Activated CD4-positive, alpha-beta T cell treated with anti-CD3 and anti-CD28 coated beads, Interleukin-2, amount 10 ng/mL, durations not matched to agents 24 days and 14 days (primary cell): ENCODE measurements at regions of chr1 and their contacts with region 1.

Region 1: GRCh38 chr1:160567858-160568682 is 11.2 kb downstream of the CD84 start:
- DNase-seq: peak; percentile 85
- H3K4me3 Mint-ChIP-seq: peak overlapping the region; percentile 68
- H3K27ac Mint-ChIP-seq: peak overlapping the region; percentile 98
- H3K4me1 Mint-ChIP-seq: peaks cover 76% of the 10 kb centered on the region
- H3K27me3 Mint-ChIP-seq: no peaks in the 10 kb centered on the region

Region 2: GRCh38 chr1:160205242-160206035 is 362.6 kb before region 1 on chr1 and contains the start of gene PEA15:
- intact Hi-C with region 1: no loop called
- DNase-seq: peak; percentile 92
- H3K4me3 Mint-ChIP-seq: peak within 1 kb of the TSS; percentile 91
- H3K27ac Mint-ChIP-seq: peak within 1 kb of the TSS; percentile 91
- H3K4me1 Mint-ChIP-seq: peaks cover 40% of the 10 kb centered on the region
- H3K27me3 Mint-ChIP-seq: no peaks in the 10 kb centered on the region
- total RNA-seq, gene PEA15: 70.2 and 70.9 TPM in 2 replicates

Region 3: DNA sequence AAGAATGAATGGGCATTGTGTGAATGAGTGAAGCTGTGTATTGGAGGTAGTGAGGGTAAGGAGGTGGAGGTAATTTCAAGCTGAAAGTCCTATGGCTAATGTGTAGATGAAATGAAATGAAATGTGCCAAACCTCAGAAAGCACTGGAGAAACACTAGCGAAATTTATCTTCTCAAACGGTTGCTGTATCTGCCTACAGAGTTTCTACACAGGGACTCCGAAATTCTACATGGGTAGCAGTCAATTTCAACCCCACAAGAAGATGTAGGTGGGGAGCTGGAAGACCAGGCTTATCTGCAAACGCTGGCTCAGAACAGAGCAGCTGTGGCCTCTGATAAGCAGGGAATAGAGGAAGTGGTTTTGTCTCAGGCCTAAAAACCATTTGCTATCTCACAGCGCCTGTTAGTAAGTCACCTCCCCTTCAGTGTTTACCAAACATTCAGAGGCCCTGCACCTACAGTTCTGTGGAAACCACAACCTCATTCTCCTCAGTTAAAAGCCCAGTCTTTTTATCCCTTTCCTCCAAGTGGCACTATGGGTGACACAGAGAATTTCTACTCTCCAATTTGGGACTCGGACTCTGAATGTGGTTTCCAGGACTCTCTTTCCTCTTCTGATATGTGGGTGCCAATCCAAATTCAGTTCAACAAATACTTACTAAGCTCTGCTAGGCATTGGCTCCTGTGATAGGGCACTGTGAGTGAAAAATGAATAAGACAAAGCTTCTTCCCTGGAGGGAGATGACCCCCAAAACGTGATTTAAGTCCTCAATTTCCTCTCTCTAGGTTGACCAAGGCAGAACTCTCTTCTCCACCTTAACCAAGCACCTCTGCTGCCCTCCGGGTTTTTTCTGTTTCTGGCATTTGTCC is 27.8 kb before region 1 on chr1:
- intact Hi-C with region 1: loop called (anchors 2 kb)
- DNase-seq: peak; percentile 90
- H3K4me3 Mint-ChIP-seq: peak overlapping the region; percentile 72
- H3K27ac Mint-ChIP-seq: peak overlapping the region; percentile 91
- H3K4me1 Mint-ChIP-seq: peaks cover 45% of the 10 kb centered on the region
- H3K27me3 Mint-ChIP-seq: no peaks in the 10 kb centered on the region

Region 4: GRCh38 chr1:160623227-160623633 is 55.2 kb after region 1 on chr1:
- intact Hi-C with region 1: loop called (anchors 2 kb)
- DNase-seq: peak; percentile 78
- H3K4me3 Mint-ChIP-seq: peak overlapping the region; percentile 75
- H3K27ac Mint-ChIP-seq: peak overlapping the region; percentile 99
- H3K4me1 Mint-ChIP-seq: peaks cover 83% of the 10 kb centered on the region
- H3K27me3 Mint-ChIP-seq: no peaks in the 10 kb centered on the region